ENCODE measurements at regions of chr5 and their contacts with region 1.

Region 1: GRCh38 chr5:76818844-76819831 is at the start of gene F2RL1:
- DNase-seq: peak; percentile 39
- H3K4me3 Mint-ChIP-seq: peak within 1 kb of the TSS; percentile 70
- H3K27ac Mint-ChIP-seq: no peak within 1 kb of the TSS
- H3K4me1 Mint-ChIP-seq: peaks cover 22% of the 10 kb centered on the region
- H3K27me3 Mint-ChIP-seq: peaks cover 49% of the 10 kb centered on the region
- total RNA-seq, gene F2RL1: 0.27 to 0.89 TPM

Region 2: GRCh38 chr5:76641514-76642120 is 177.5 kb before region 1 on chr5:
- CTCF ChIA-PET with region 1: no interaction called
- POLR2A ChIA-PET with region 1: no interaction called
- DNase-seq: peak; percentile 77
- H3K4me3 Mint-ChIP-seq: no peak overlapping the region
- H3K27ac Mint-ChIP-seq: no peak overlapping the region
- H3K4me1 Mint-ChIP-seq: peaks cover 22% of the 10 kb centered on the region
- H3K27me3 Mint-ChIP-seq: no peaks in the 10 kb centered on the region

Region 3: GRCh38 chr5:76790632-76791290 is 28.4 kb before region 1 on chr5:
- CTCF ChIA-PET with region 1: interaction called, 10 read pairs
- POLR2A ChIA-PET with region 1: no interaction called
- DNase-seq: peak; percentile 12
- H3K4me3 Mint-ChIP-seq: no peak overlapping the region
- H3K27ac Mint-ChIP-seq: no peak overlapping the region
- H3K4me1 Mint-ChIP-seq: peaks cover 13% of the 10 kb centered on the region
- H3K27me3 Mint-ChIP-seq: no peaks in the 10 kb centered on the region

Region 4: DNA sequence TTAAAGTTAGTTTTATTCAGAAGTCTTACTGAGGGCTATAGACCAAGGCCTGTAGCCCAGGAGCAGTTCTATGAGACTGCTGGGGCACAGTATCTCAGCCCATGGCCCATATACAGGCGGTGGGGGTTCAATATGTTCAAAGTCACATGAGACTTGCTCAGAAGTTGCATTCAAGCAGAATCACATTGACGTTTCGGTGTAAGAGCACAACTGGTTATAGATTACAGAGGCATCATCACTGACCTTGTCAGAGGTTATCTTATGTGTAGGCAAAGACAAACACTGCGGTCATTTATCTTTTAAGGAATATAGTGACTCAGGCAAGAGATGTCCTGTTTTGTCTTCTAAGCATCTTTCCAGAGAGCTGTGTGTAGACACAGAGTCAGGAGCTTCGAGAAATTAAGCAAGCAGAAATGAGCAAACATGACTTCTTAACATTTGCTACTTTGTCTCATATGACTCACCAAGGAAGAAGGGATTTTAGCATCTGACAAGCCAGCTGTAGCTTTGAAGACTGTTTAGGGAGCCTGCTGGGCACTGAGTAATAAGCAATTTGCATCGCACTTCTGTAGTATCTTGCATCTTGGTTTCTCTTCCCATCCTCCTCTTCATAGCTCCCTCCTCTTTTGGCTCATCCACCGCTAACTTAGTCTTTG is 13.2 kb before region 1 on chr5:
- CTCF ChIA-PET with region 1: interaction called, 12 read pairs
- POLR2A ChIA-PET with region 1: no interaction called
- DNase-seq: no peak
- H3K4me3 Mint-ChIP-seq: no peak overlapping the region
- H3K27ac Mint-ChIP-seq: no peak overlapping the region
- H3K4me1 Mint-ChIP-seq: no peaks in the 10 kb centered on the region
- H3K27me3 Mint-ChIP-seq: no peaks in the 10 kb centered on the region

Measured in activated CD4-positive, alpha-beta T cell treated with anti-CD3 and anti-CD28 coated beads, Interleukin-2, amount 10 ng/mL, durations not matched to agents 7 days and 5 days (primary cell).